Common myeloid progenitor, CD34-positive (primary cell): ENCODE measurements at regions of chr7 and their contacts with region 1.

Region 1: GRCh38 chr7:24911213-24911603 is 68.8 kb downstream of the OSBPL3 start:
- DNase-seq: peak; percentile 71 to 95 (median 93)
- H3K4me3 ChIP-seq: peak overlapping the region in 4 of 7 experiments; percentile 12 to 48 (median 42)
- H3K27ac ChIP-seq: peak overlapping the region; percentile 40 to 48
- H3K4me1 ChIP-seq: peaks cover 38 to 86% (median 76%) of the 10 kb centered on the region in 4 experiments
- H3K27me3 ChIP-seq: no peaks in the 10 kb centered on the region

Region 2: DNA sequence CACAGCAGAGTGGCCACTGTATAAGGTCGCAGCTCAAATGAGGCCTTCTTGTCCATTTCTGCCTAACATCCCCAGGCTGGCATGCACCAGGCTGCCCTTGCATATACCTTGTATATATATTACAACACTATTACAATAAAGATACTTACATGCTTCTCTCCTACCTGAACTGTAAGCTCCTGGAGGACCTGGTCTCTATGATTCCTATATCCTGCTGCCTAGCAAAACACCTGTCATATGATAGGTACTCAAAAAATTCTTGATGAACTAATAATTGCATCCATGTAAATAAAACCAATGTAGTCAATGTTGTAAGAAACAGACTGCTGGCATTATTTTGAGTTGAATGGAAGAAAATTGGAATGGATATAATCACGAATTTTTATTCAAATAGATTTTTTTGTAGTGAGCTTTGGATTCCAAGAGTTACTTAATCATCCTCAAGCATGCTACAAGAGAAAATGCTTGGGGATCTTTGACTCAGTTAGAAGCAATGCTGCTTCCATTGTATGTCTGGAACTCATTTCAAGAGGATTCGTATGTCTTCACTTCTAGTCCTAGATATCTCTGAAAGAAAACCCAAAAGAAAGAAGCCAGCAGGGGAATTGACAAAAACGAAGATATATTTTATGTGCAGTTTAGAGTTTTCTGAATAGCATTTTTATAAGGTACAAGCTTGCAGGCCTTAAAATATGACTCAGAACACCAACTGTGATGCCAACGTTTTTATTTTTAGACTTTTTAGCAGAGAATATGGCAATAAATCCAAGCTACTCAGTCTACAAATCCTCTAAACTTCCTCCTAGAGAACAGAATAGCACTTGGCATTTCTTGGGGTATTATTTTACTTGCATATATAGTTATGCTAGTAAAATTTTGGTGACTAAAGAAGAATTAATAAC is 15.7 kb after region 1 on chr7:
- CTCF ChIA-PET with region 1: interaction called, 18 read pairs
- POLR2A ChIA-PET with region 1: no interaction called
- DNase-seq: no peak
- H3K4me3 ChIP-seq: no peak overlapping the region
- H3K27ac ChIP-seq: no peak overlapping the region
- H3K4me1 ChIP-seq: peaks cover 0 to 38% (median 10%) of the 10 kb centered on the region in 4 experiments
- H3K27me3 ChIP-seq: no peaks in the 10 kb centered on the region

Region 3: GRCh38 chr7:25025218-25025671 is 114.0 kb after region 1 on chr7:
- CTCF ChIA-PET with region 1: no interaction called
- POLR2A ChIA-PET with region 1: no interaction called
- DNase-seq: no peak
- H3K4me3 ChIP-seq: no peak overlapping the region
- H3K27ac ChIP-seq: no peak overlapping the region
- H3K4me1 ChIP-seq: peaks cover 0 to 4% (median 0%) of the 10 kb centered on the region in 4 experiments
- H3K27me3 ChIP-seq: no peaks in the 10 kb centered on the region